ENCODE measurements at regions of chr11 and their contacts with region 1.

Region 1: DNA sequence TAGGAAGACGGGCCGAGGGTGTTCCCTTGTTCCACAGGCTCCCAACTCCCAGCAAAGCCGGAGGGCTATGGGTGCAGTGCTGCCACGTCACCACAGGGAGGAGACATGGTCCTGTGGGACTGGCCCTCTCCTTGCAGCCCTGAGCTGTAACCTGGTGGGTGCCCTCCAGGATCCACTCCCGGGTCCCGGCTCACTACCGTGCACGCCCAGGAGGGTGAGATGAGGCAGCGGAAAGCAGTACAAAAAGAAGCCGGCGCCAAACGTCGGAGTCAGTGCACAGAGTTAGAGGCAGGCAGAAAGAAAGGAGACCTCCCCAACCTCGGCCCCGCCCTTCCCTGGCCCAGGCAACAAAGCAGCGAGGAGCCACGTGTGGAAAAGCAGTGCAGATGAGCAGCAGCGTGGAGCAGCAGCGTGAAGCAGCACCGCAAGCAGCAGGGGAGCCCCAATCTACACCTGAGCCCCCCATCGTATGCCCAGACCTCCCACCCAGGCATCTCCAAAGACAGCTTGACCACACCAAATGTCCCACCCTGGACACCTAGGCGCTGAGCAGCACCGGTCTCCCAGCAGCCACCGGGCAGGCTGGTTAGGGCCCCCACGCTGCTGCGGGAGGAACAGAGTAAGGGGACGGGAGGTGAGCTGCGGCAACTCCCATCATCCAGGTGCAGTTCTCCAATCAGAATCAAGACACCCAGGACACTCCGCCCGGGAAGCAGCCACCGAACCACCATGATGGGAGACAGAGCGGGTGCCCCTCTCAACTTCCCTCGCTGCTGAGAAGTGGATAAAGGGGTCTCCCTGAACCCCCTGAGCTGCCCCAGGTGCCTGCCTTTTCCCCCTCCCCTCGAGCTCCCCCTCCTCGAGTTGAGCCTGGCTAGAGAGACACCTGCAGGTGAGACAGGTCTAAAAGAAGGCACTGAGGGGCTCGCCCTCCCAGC is 28.8 kb downstream of the IGSF9B start:
- DNase-seq: peak; percentile 79
- H3K4me3 Mint-ChIP-seq: peak overlapping the region; percentile 54
- H3K27ac Mint-ChIP-seq: peak overlapping the region; percentile 71
- H3K4me1 Mint-ChIP-seq: peaks cover 27% of the 10 kb centered on the region
- H3K27me3 Mint-ChIP-seq: no peaks in the 10 kb centered on the region

Region 2: GRCh38 chr11:133947321-133947756 is 19.4 kb after region 1 on chr11:
- CTCF ChIA-PET with region 1: interaction called, 32 read pairs
- intact Hi-C with region 1: loop called (anchors 1 kb)
- DNase-seq: peak; percentile 82
- H3K4me3 Mint-ChIP-seq: peak overlapping the region; percentile 14
- H3K27ac Mint-ChIP-seq: no peak overlapping the region
- H3K4me1 Mint-ChIP-seq: peaks cover 65% of the 10 kb centered on the region
- H3K27me3 Mint-ChIP-seq: no peaks in the 10 kb centered on the region

Region 3: GRCh38 chr11:133966921-133967598 is 39.1 kb after region 1 on chr11:
- CTCF ChIA-PET with region 1: no interaction called
- intact Hi-C with region 1: loop called (anchors 1 kb)
- DNase-seq: peak; percentile 84
- H3K4me3 Mint-ChIP-seq: peak overlapping the region; percentile 81
- H3K27ac Mint-ChIP-seq: peak overlapping the region; percentile 73
- H3K4me1 Mint-ChIP-seq: peaks cover 9% of the 10 kb centered on the region
- H3K27me3 Mint-ChIP-seq: peaks cover 2% of the 10 kb centered on the region

Region 4: GRCh38 chr11:134050541-134051383 is 122.8 kb after region 1 on chr11:
- CTCF ChIA-PET with region 1: interaction called, 17 read pairs
- intact Hi-C with region 1: loop called (anchors 1 kb)
- DNase-seq: peak; percentile 74
- H3K4me3 Mint-ChIP-seq: peak overlapping the region; percentile 59
- H3K27ac Mint-ChIP-seq: peak overlapping the region; percentile 76
- H3K4me1 Mint-ChIP-seq: no peaks in the 10 kb centered on the region
- H3K27me3 Mint-ChIP-seq: peaks cover 9% of the 10 kb centered on the region

Region 5: DNA sequence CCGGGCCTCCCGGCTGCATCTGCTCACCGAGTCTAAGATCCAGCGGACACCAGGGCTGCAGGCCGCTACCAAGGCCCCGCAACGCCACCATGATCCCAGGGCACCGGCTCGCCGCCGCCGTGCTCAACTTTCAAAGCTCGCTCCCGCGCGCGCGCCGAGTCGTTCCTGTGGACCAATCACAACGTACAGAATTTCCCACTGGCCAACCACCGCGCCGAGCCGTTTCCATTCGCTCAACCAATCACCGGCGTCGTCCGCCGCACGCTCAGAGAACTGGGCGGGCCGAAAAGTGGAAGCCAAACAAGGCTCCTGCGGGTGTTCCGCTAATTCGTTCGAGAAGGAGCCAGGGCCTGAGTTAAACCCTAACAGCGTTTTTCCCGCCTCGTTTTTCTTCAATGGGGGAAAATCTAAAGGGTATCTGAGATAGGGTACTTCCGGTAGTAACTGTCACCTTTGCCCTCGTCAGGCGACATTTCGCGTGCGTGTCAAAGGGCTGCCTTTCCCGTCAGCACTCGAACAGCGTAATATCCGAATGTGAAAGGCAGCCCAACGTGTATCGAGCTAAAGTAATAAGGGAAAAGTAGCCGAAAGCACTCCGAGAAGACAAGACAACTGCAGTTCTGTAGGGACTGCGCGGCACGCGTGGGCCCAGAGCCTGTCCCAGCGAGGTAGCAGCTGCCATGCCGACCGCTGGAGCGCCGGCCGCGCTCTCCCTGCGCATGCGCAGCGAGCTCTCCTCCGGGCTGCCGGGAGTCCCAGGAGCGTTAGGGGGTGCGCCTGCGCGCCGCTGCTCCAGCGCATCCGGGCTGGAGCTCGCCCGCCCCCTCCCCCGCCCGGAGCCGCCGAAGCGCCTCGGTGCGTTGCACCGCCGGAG is 296.1 kb after region 1 on chr11 and contains the starts of genes NCAPD3 and VPS26B:
- CTCF ChIA-PET with region 1: no interaction called
- intact Hi-C with region 1: loop called (anchors 1 kb)
- DNase-seq: peak; percentile 98
- H3K4me3 Mint-ChIP-seq: peak within 1 kb of the TSS; percentile 95
- H3K27ac Mint-ChIP-seq: peak within 1 kb of the TSS; percentile 97
- H3K4me1 Mint-ChIP-seq: peaks cover 59% of the 10 kb centered on the region
- H3K27me3 Mint-ChIP-seq: no peaks in the 10 kb centered on the region
- total RNA-seq, gene NCAPD3: 126 TPM
- total RNA-seq, gene VPS26B: 39.8 to 42.3 TPM

Region 6: DNA sequence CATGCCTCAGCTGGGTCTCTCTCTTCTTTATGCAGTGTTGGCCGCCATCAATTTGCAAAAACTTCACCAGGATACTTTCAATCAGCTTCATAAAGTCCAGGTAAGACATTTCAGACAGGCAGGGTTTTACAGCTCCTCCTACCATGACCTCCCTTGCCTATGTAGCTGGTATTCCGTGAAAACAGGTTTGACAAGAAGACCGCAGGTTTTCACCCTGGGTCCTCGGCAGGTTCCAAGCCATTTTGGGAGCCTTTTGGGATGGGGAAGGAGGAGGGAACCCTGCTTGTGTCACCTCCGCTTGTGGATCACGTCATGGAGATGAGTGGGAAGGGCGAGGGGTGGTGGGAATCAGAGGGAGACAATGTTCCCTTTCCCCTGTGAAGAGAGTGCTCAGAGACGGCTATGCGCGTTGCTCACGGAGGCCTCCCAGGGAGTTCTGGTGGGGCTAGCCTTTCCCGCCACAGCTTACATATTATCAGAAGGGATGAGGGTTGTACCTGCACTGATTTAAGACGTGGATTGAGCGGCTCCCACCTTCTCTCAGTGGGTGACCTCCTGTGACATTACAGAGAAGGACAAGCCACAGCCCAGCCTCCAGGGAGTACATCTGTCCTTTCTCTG is 365.3 kb after region 1 on chr11:
- CTCF ChIA-PET with region 1: no interaction called
- intact Hi-C with region 1: no loop called
- DNase-seq: no peak
- H3K4me3 Mint-ChIP-seq: no peak overlapping the region
- H3K27ac Mint-ChIP-seq: no peak overlapping the region
- H3K4me1 Mint-ChIP-seq: no peaks in the 10 kb centered on the region
- H3K27me3 Mint-ChIP-seq: no peaks in the 10 kb centered on the region

Region 7: DNA sequence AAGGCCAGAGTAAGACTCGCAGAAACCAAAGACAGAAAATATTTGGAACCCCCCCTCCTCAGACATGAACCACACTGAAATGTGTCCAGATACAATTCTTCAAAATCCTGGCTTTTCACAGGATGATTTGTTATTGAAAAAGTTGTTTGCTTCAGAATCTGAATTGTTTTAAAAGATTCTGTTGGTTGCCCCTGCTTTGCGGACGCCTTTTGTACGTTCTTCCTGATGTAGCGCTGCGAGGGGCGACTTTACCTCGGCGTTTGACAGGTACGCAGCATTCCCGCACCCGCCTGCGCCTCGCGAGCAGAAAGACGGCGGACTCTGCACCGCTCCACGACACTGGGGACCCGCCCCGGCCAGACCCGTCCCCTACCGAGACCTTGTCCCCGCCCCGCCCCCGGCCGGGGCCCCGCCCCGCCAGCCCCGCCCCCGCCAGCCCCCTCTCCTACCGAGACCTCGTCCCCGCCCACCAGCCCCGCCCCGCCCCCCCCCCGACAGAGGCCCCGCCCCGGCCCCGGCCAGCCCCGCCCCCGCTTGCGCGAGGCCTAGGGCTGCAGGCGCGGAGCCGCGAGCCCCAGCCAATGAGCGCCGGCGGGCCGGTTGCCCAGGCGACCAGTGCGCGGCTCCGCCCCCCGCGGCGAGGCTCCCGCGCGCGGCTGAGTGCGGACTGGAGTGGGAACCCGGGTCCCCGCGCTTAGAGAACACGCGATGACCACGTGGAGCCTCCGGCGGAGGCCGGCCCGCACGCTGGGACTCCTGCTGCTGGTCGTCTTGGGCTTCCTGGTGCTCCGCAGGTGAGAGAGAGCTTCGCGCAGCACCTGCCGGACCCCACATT is 403.6 kb after region 1 on chr11 and contains the start of gene GLB1L2:
- CTCF ChIA-PET with region 1: no interaction called
- intact Hi-C with region 1: loop called (anchors 10 kb)
- DNase-seq: peak; percentile 69
- H3K4me3 Mint-ChIP-seq: peak within 1 kb of the TSS; percentile 80
- H3K27ac Mint-ChIP-seq: no peak within 1 kb of the TSS
- H3K4me1 Mint-ChIP-seq: peaks cover 7% of the 10 kb centered on the region
- H3K27me3 Mint-ChIP-seq: peaks cover 9% of the 10 kb centered on the region
- total RNA-seq, gene GLB1L2: 9.3 to 11.0 TPM

Measured in activated naive CD4-positive, alpha-beta T cell treated with anti-CD3 and anti-CD28 coated beads for 36 hours (primary cell).